Gastrocnemius medialis (tissue), 4 donors: ENCODE measurements at regions of chrX and their contacts with region 1.

Region 1: DNA sequence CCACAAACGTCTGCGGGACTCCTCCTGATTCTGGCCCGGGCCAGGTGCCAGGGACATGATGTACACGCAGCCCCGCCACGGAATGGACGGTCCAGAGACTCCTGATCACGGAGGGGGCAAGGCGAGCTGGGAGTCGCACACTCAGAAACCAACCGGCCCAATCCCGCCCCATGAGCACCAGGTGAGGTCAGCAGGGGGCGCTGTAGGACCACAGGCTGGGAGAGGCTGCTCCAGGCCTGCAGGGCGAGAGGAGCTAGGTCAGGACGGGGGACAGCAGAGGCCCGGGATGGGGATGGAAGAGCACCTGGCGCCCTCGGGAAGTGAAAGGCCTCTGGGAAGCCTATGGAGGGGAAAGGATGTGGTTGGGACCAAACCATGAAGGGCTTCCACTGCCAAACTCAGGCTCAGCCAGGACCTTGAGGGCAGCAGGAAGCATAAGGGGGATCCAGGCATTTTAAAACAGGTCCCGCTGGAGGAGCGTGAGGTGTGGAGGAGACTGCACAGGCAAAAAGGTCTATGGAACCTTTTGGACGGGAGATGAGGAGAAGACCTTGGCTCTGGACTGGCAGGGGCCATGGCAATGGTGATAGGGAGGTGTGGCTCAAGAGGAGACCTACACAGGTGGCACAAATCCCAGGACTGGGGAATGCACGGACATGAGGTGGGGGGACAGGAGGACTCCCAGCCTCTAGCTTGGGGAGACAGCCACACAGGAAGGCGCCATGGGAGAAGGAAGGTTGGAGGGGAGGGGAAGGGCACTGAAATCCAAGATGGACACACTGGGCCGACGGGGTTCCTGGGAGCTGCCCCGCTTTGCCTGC is 79.2 kb downstream of the MTMR1 start:
- DNase-seq: peak; percentile 51 to 71
- ATAC-seq: peak; percentile 45 to 86
- H3K4me3 ChIP-seq: no peak overlapping the region
- H3K27ac ChIP-seq: no peak overlapping the region
- H3K4me1 ChIP-seq: peaks cover 0 to 5% of the 10 kb centered on the region in 2 donors
- H3K27me3 ChIP-seq: no peaks in the 10 kb centered on the region
- CTCF ChIP-seq: peak; percentile 78 to 90 (median 88)
- POLR2A ChIP-seq: no peak

Region 2: DNA sequence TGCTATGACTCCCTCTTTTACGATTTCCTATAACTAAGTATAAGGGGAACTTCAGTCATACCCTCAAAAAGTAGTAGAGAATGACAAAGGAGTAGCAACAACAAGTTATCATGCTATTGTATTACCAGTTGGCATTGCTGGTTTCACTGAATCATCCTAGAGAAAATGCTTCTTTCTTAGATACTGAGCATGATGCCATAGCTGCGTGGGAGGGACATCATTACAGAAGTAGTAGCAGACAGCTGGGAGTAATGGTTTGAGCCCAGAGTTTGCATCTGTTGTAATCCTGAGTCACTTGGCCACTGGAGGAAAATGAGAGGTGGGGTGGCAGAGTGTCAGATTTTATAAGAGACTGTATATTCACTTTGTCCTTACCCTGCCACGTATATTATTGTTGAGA is 40.6 kb before region 1 on chrX:
- in situ Hi-C with region 1: no loop called
- intact Hi-C with region 1: no loop called
- DNase-seq: peak in 1 of 2 donors; percentile 25
- ATAC-seq: peak in 1 of 2 donors; percentile 78
- H3K4me3 ChIP-seq: no peak overlapping the region
- H3K27ac ChIP-seq: no peak overlapping the region
- H3K4me1 ChIP-seq: no peaks in the 10 kb centered on the region
- H3K27me3 ChIP-seq: no peaks in the 10 kb centered on the region
- CTCF ChIP-seq: no peak
- POLR2A ChIP-seq: no peak

Region 3: DNA sequence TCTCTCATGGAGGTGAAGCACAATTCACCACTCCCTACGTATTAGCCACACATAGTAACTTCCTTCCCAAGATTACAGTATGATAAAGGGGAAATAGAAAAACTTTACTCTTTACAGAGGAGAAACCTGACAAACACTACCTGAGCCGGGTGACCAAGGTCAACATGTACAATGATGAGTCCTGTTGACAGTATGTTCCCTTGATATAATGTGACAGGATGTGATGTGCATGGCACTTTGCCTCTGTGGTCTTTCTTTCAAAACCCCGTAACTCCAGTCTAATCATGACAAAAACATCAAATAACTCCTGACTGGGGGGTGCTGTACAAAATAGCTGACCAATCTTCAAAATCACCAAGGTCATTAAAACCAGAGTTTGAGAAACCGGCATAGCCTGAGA is 65.5 kb after region 1 on chrX:
- in situ Hi-C with region 1: no loop called
- intact Hi-C with region 1: loop called (anchors 5 kb)
- DNase-seq: no peak
- ATAC-seq: peak in 1 of 2 donors; percentile 43
- H3K4me3 ChIP-seq: no peak overlapping the region
- H3K27ac ChIP-seq: peak overlapping the region; percentile 31 to 52 (median 33)
- H3K4me1 ChIP-seq: peaks cover 11 to 23% of the 10 kb centered on the region in 2 donors
- H3K27me3 ChIP-seq: no peaks in the 10 kb centered on the region
- CTCF ChIP-seq: no peak
- POLR2A ChIP-seq: no peak

Region 4: DNA sequence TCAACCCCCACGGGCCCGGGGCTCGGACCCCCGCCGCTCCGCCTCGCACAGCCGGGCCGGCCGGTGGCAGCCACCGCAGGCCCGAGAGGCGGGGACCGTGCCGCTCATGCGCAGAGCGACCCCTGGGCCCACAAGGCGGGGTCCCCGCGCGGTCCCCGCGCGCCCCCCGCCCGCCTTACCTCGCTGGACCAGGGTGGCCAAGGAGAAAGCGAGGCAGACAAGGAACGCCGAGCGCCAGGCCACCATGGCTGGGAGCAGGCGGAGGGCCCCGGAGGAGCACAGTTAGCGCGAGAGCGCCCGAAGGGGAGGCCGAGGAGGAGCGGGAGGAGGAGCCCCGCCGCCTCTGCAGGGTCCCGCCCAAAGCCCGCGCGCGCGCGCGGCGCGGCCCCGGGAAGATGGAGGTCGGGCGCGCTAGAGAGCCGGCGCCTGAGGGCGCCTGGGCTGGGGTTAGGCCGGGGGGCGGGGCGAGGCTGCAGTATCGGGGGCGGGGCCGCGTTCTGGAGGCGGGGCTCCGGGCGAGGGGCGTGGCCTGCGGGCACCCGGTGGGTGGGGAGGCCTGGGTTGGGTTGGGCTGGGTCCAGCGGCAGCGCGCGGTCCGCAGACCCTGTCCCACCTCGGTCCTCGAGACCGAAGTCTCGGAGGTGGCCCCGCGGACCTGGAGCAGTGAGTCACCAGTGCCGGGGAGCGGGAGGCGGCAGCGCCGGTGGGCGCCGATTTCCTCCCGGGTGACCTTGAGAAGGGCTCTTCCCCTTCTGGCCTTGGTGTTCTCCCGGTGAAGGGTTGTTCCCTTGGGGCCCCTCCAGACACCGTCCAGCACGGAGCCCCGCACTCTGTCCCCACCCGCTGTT is 126.2 kb after region 1 on chrX and contains the start of gene CD99L2:
- in situ Hi-C with region 1: no loop called
- intact Hi-C with region 1: loop called (anchors 5 kb)
- DNase-seq: peak; percentile 73 to 86
- ATAC-seq: peak; percentile 82 to 86
- H3K4me3 ChIP-seq: peak within 1 kb of the TSS; percentile 60 to 75 (median 69)
- H3K27ac ChIP-seq: peak within 1 kb of the TSS; percentile 84 to 92 (median 86)
- H3K4me1 ChIP-seq: peaks cover 4 to 7% of the 10 kb centered on the region in 2 donors
- H3K27me3 ChIP-seq: no peaks in the 10 kb centered on the region
- CTCF ChIP-seq: no peak
- POLR2A ChIP-seq: peak; percentile 68
- total RNA-seq, gene CD99L2: 202 to 289 (median 251) TPM

Region 5: GRCh38 chrX:150982788-150983520 is 210.6 kb after region 1 on chrX and contains the start of gene HMGB3:
- in situ Hi-C with region 1: no loop called
- intact Hi-C with region 1: loop called (anchors 5 kb)
- DNase-seq: peak; percentile 68 to 83
- ATAC-seq: peak; percentile 95 to 97
- H3K4me3 ChIP-seq: peak within 1 kb of the TSS; percentile 53 to 58 (median 56)
- H3K27ac ChIP-seq: peak within 1 kb of the TSS in 3 of 4 donors; percentile 36 to 78 (median 72)
- H3K4me1 ChIP-seq: peaks cover 0 to 5% of the 10 kb centered on the region in 2 donors
- H3K27me3 ChIP-seq: no peaks in the 10 kb centered on the region
- CTCF ChIP-seq: no peak
- POLR2A ChIP-seq: peak; percentile 47 to 73
- total RNA-seq, gene HMGB3: 15.0 to 58.3 (median 18.7) TPM

Region 6: GRCh38 chrX:151004082-151004481 is 231.7 kb after region 1 on chrX:
- in situ Hi-C with region 1: no loop called
- intact Hi-C with region 1: loop called (anchors 5 kb)
- DNase-seq: no peak
- ATAC-seq: peak in 1 of 2 donors; percentile 41
- H3K4me3 ChIP-seq: no peak overlapping the region
- H3K27ac ChIP-seq: no peak overlapping the region
- H3K4me1 ChIP-seq: no peaks in the 10 kb centered on the region
- H3K27me3 ChIP-seq: no peaks in the 10 kb centered on the region
- CTCF ChIP-seq: peak in 2 of 5 experiments; percentile 13 to 15
- POLR2A ChIP-seq: no peak

Region 7: DNA sequence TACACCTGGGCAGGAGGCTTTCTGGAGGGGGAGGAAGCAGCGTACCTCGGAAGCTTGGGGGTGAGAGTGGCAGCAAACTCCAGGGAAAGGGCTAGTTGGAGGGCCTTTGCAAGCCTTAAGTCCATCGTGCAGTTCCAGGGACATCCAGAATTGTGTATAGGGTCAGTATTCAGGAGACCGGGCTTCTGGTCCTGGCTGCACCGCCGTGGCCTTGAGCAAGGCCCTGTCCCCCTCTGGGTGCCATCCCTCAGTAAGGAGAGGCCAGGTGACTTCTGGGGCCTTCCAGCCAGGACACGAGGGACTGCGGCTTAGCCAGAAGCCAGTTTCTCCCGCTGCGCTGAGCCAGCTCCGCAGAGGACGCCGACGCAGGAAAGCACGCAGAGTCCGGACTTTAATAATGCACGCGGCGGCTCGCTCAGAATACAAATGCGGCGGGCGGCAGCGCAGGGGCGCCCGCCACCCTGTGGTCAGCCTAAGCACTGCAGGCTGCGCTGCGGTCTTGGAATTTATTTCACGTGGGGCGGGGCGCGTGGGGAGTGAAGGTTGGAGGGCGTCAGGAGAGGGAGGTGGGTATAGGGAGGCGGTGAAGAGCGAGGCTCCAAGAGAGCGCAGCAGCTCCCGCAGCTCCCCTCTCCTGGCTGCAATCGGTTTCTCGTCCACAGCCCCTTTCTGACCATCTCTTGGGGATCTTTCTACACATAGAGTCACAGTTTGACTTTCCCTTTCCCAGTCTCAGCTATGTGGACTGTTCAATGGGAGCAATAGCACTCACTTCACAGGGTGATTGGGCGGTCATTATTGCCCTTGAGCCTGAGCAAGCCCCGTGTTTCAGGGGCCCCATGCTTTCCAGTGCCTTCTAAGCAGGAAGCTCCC is 310.0 kb after region 1 on chrX:
- in situ Hi-C with region 1: loop called (anchors 5 to 10 kb)
- intact Hi-C with region 1: loop called (anchors 1 kb)
- DNase-seq: peak; percentile 6 to 40
- ATAC-seq: peak; percentile 86 to 95
- H3K4me3 ChIP-seq: peak overlapping the region; percentile 13 to 36 (median 23)
- H3K27ac ChIP-seq: no peak overlapping the region
- H3K4me1 ChIP-seq: peaks cover 0 to 9% of the 10 kb centered on the region in 2 donors
- H3K27me3 ChIP-seq: no peaks in the 10 kb centered on the region
- CTCF ChIP-seq: peak; percentile 61 to 93 (median 87)
- POLR2A ChIP-seq: no peak